Endothelial cell of umbilical vein (primary cell): ENCODE measurements at regions of chr5 and their contacts with region 1.

Region 1: DNA sequence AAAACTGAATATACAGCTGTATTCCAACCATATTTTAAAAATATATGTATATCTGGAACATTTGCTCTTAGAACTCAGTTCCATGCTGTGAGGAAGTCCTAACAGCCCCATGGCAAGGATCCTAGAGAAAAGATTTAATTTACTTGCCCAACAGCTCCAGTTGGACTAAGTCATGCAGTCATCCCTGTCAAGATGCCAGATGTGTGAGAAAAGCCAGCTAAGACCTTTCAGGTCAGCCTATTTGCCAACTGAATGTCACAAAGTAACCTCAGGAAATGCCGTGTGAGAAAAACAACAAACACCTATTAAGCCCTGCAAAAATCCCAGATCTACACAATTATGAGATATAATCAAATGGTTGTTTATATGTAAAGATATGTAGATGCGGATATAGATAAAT is 416.3 kb downstream of the NR2F1-AS1 start:
- DNase-seq: peak; percentile 80
- H3K4me3 ChIP-seq: no peak overlapping the region
- H3K27ac ChIP-seq: peak overlapping the region; percentile 100
- H3K4me1 ChIP-seq: peaks cover 45% of the 10 kb centered on the region
- H3K27me3 ChIP-seq: no peaks in the 10 kb centered on the region
- CTCF ChIP-seq: no peak
- POLR2A ChIP-seq: no peak

Region 2: GRCh38 chr5:92909602-92909962 is 255.1 kb before region 1 on chr5:
- CTCF ChIA-PET with region 1: interaction called, 6 read pairs
- POLR2A ChIA-PET with region 1: no interaction called
- dilution Hi-C with region 1: no loop called
- intact Hi-C with region 1: loop called (anchors 2 kb)
- DNase-seq: peak; percentile 53
- H3K4me3 ChIP-seq: no peak overlapping the region
- H3K27ac ChIP-seq: no peak overlapping the region
- H3K4me1 ChIP-seq: peaks cover 16% of the 10 kb centered on the region
- H3K27me3 ChIP-seq: no peaks in the 10 kb centered on the region
- CTCF ChIP-seq: peak; percentile 68 to 74
- POLR2A ChIP-seq: no peak

Region 3: DNA sequence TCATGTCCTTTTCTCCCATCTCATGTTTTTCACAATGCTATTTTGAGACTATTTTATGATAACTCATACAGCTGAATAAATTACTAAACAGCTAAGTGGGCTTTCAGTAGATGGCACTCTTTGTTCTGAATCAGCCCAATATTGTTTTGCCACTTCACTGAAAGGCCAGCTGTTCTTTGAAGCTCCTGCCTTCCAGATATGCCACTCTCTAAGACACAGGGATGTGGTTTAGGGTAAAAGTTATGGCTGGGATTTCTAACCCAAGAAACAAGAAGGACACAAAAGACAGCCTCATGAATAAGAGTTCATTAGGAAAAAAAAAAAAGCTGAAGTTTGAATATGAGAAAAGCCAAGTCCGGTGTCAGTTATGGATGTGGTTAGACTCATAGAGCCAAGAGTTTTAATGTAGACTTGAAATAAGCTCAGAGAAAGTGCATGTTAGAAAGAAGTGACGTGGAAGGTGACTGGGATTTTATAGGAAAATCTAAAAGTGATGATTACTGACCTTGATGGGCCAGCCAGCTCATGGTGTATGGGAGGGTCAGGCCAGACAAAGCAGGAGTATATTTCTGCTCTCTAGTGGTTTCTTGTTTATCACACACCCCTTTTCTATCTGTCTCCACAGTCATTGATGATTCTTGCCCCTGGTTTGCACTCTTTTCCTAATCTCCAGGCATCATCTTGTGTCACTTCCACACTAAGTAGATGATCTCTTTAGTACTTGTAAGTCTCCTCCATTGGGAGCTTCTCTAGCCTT is 72.2 kb before region 1 on chr5:
- CTCF ChIA-PET with region 1: interaction called, 5 read pairs
- POLR2A ChIA-PET with region 1: no interaction called
- dilution Hi-C with region 1: no loop called
- intact Hi-C with region 1: loop called (anchors 2 kb)
- DNase-seq: peak; percentile 82
- H3K4me3 ChIP-seq: no peak overlapping the region
- H3K27ac ChIP-seq: no peak overlapping the region
- H3K4me1 ChIP-seq: no peaks in the 10 kb centered on the region
- H3K27me3 ChIP-seq: no peaks in the 10 kb centered on the region
- CTCF ChIP-seq: peak; percentile 13 to 33
- POLR2A ChIP-seq: no peak

Region 4: GRCh38 chr5:93151121-93151520 is 13.6 kb before region 1 on chr5:
- CTCF ChIA-PET with region 1: interaction called, 23 read pairs
- POLR2A ChIA-PET with region 1: no interaction called
- dilution Hi-C with region 1: no loop called
- intact Hi-C with region 1: loop called (anchors 1 kb)
- DNase-seq: peak; percentile 83
- H3K4me3 ChIP-seq: no peak overlapping the region
- H3K27ac ChIP-seq: peak overlapping the region; percentile 66
- H3K4me1 ChIP-seq: peaks cover 17% of the 10 kb centered on the region
- H3K27me3 ChIP-seq: no peaks in the 10 kb centered on the region
- CTCF ChIP-seq: no peak
- POLR2A ChIP-seq: no peak

Region 5: GRCh38 chr5:93249651-93250289 is 85.1 kb after region 1 on chr5:
- CTCF ChIA-PET with region 1: no interaction called
- POLR2A ChIA-PET with region 1: no interaction called
- dilution Hi-C with region 1: no loop called
- intact Hi-C with region 1: loop called (anchors 1 kb)
- DNase-seq: peak; percentile 87
- H3K4me3 ChIP-seq: peak overlapping the region in 2 of 3 experiments; percentile 14 to 58
- H3K27ac ChIP-seq: peak overlapping the region; percentile 88
- H3K4me1 ChIP-seq: peaks cover 26% of the 10 kb centered on the region
- H3K27me3 ChIP-seq: no peaks in the 10 kb centered on the region
- CTCF ChIP-seq: no peak
- POLR2A ChIP-seq: peak; percentile 57

Region 6: DNA sequence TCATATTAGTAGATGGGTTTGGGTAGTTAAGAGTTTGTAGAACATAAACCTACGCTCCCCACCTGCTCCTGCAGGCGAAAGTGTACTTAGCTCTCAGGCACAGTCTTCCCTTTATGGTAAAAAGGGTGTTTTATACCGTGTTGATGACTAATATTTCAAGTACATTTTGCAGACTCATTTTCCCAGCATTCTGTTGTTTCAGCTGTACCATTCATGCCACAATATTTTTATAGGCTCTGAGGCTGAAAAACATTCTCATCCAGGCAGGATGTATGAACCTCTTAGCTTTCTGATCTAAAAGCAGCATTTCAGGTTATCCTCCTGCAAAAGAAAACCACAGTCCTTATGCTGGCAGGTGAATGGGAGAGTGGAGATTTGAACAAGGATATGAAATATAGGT is 184.9 kb after region 1 on chr5:
- CTCF ChIA-PET with region 1: no interaction called
- POLR2A ChIA-PET with region 1: no interaction called
- dilution Hi-C with region 1: no loop called
- intact Hi-C with region 1: loop called (anchors 2 kb)
- DNase-seq: peak; percentile 97
- H3K4me3 ChIP-seq: no peak overlapping the region
- H3K27ac ChIP-seq: peak overlapping the region; percentile 37
- H3K4me1 ChIP-seq: peaks cover 9% of the 10 kb centered on the region
- H3K27me3 ChIP-seq: no peaks in the 10 kb centered on the region
- CTCF ChIP-seq: no peak
- POLR2A ChIP-seq: peak; percentile 51

Region 7: GRCh38 chr5:93681432-93681831 is 516.7 kb after region 1 on chr5:
- CTCF ChIA-PET with region 1: no interaction called
- POLR2A ChIA-PET with region 1: interaction called, 11 read pairs
- dilution Hi-C with region 1: no loop called
- intact Hi-C with region 1: no loop called
- DNase-seq: no peak
- H3K4me3 ChIP-seq: no peak overlapping the region
- H3K27ac ChIP-seq: no peak overlapping the region
- H3K4me1 ChIP-seq: peaks cover 7% of the 10 kb centered on the region
- H3K27me3 ChIP-seq: no peaks in the 10 kb centered on the region
- CTCF ChIP-seq: peak in 1 of 2 donors; percentile 12
- POLR2A ChIP-seq: no peak